HEK293 (cell line): ENCODE measurements at regions of chr2 and their contacts with region 1.

Region 1: GRCh38 chr2:231514103-231514950 is 15.9 kb downstream of the NMUR1 start:
- H3K4me3 ChIP-seq: peak overlapping the region; percentile 51
- H3K27ac ChIP-seq: peak overlapping the region; percentile 47; the same call in 1 of the 2 replicates
- H3K4me1 ChIP-seq: no peaks in the 10 kb centered on the region; the same call in 1 of the 2 replicates
- CTCF ChIP-seq: no peak

Region 2: GRCh38 chr2:231482806-231483391 is 31.4 kb before region 1 on chr2:
- CTCF ChIA-PET with region 1: interaction called, 10 read pairs
- POLR2A ChIA-PET with region 1: no interaction called
- H3K4me3 ChIP-seq: no peak overlapping the region
- H3K27ac ChIP-seq: no peak overlapping the region
- H3K4me1 ChIP-seq: no peaks in the 10 kb centered on the region
- CTCF ChIP-seq: peak; percentile 84

Region 3: DNA sequence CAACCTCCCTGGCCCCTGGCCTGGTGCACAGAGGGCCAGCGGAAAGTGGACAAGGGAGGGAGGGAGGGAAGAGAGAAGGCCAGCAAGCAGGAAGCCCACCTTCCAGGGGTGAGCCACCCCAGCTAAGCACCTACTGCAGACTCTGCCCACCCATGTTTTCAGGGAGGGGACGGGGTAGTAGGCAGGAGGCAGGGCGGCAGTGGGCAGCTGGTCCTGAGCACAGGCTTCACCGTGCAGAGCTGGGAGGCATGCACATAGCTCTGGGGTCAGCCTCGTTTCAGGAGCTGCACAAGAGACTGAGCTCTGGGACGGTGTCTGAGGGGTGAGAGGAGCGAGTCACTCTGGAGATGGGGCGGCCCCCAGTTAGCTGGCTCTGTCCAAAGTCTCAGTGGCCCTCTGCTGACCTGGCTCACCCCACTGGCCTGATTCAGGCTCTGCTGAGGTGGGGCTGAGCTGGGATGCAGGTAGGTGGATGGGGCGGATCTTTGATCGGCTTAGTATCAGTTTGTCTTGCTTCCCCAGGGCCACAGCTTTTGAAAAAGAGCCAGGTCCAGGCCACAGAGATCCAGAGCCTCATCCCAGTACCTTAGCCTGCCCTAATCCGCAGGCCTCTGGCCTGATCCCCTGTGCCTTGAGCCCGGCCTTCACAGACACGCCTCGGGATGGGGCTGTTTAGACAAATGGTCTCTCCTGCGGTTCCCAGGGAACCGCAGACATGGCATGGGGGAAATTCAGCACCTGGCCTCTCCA is 12.2 kb after region 1 on chr2:
- CTCF ChIA-PET with region 1: interaction called, 14 read pairs
- POLR2A ChIA-PET with region 1: no interaction called
- H3K4me3 ChIP-seq: no peak overlapping the region
- H3K27ac ChIP-seq: no peak overlapping the region
- H3K4me1 ChIP-seq: no peaks in the 10 kb centered on the region
- CTCF ChIP-seq: no peak

Region 4: GRCh38 chr2:231890896-231891513 is 376.7 kb after region 1 on chr2:
- CTCF ChIA-PET with region 1: no interaction called
- POLR2A ChIA-PET with region 1: no interaction called
- H3K4me3 ChIP-seq: no peak overlapping the region
- H3K27ac ChIP-seq: no peak overlapping the region
- H3K4me1 ChIP-seq: no peaks in the 10 kb centered on the region; the same call in 1 of the 2 replicates
- CTCF ChIP-seq: no peak